ENCODE measurements at regions of chr19 and their contacts with region 1.

Region 1: DNA sequence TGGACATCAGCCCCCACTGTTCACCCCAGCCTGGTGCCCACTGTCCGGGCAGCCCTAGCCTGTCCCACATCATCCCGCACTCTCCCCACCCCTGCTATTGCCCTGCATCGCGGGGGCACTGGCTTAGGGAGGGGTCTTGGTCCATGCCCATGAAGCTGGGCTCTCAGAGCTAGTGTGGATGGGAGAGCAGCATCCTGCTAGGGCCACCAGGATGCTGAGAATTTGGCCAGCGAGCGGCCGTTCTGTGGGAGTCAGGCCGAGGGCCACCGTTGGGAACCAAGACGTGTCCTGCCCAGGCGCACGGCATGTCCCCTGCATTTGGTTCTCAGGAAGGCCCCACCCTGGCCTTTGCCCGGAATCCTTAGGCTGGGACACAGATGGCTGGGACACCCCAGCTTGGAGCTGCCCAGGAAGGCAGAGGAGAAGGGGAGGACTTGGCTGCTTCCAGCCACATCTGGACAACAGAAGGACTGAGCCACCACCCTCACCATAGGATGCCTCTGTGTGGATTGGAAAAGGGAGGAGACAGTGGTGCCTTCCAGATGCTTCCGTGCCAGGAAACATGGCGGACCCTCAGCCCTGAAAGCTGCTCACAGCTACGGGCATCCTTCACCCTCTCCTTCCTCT is 14.6 kb downstream of the ADGRE5 start:
- DNase-seq: no peak
- CTCF ChIP-seq: no peak

Region 2: DNA sequence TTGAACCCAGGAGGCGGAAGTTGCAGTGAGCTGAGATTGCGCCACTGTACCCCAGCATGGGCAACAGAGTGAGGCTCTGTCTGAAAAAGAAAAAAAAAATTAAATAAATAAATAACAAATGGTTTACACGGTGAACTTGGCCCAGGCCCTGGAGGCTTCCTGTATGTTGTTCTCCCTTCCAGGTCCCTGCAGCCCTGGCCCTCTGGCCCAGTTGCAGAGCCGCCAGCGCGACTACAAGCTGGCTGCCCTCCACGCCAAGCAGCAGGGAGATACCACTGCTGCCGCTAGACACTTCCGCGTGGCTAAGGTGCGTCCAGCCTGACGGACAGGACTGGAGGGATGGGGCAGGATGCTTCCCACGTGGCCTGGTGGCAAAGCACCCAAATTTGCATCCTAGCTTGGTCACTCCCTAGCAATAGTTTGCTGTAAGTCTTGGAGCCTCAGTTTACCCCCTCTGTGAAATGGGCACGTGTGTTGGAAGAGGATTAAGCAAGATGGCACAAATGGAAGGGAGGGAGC is 477.9 kb before region 1 on chr19:
- in situ Hi-C with region 1: no loop called
- DNase-seq: no peak
- CTCF ChIP-seq: no peak

Region 3: DNA sequence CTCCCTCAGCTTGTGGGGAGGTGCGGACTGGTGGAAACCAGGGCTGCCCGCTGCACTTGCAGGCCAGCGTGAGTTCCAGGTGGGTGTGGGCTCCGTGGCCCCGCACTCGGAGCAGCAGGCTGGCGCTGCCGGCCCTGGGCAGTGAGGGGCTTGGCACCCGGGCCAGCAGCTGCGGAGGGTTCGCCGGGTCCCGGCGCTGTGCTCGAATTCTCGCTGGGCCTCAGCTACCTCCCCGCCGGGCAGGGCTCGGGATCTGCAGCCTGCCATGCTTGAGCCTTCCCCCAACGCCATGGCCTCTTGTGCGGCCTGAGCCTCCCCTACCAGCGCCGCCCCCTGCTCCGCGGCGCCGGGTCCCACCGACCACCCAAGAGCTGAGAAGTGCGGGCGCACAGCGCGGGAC is 118.2 kb before region 1 on chr19:
- in situ Hi-C with region 1: no loop called
- DNase-seq: no peak
- CTCF ChIP-seq: no peak

Region 4: GRCh38 chr19:14496028-14496833 is 100.4 kb after region 1 on chr19 and contains the start of gene GIPC1:
- in situ Hi-C with region 1: no loop called
- DNase-seq: peak; percentile 98
- CTCF ChIP-seq: no peak

Region 5: DNA sequence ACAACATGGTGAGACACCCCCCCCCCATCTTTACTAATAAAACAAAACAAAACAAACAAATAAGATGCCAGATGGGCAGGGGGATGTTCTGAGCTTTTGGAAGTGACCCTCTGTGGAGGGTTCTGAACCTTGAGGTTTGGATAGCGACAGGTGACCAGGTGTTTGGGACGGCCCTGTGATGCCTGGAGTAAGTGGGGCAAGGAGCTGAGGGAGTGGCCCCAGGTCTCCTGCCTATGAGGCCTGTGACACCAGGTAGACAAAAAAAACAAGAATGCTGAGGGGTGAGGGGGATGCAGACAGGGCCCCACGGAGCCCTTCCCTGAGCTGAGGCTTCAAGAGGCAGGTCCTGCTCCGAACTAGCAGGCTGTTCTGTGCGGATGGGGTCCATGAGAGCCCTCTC is 373.4 kb after region 1 on chr19:
- in situ Hi-C with region 1: loop called (anchors 5 kb)
- DNase-seq: no peak
- CTCF ChIP-seq: no peak

Measured in GM13977 (cell line).